Activated T-helper 1 cell treated with anti-CD3 and anti-CD28 coated beads, Interleukin-12 subunit alpha, Interleukin-12 subunit beta, Interleukin-2, Interleukin-4 antibody, amounts not matched to agents 30 ng/mL and 10 ng/mL and 1 ng/mL, durations not matched to agents 14 hours and 24 hours and 36 hours (primary cell): ENCODE measurements at regions of chr10 and their contacts with region 1.

Region 1: GRCh38 chr10:102009801-102010425 is 46.1 kb downstream of the ARMH3 start:
- DNase-seq: peak; percentile 41
- H3K4me3 Mint-ChIP-seq: no peak overlapping the region
- H3K27ac Mint-ChIP-seq: no peak overlapping the region
- H3K4me1 Mint-ChIP-seq: no peaks in the 10 kb centered on the region
- H3K27me3 Mint-ChIP-seq: no peaks in the 10 kb centered on the region

Region 2: DNA sequence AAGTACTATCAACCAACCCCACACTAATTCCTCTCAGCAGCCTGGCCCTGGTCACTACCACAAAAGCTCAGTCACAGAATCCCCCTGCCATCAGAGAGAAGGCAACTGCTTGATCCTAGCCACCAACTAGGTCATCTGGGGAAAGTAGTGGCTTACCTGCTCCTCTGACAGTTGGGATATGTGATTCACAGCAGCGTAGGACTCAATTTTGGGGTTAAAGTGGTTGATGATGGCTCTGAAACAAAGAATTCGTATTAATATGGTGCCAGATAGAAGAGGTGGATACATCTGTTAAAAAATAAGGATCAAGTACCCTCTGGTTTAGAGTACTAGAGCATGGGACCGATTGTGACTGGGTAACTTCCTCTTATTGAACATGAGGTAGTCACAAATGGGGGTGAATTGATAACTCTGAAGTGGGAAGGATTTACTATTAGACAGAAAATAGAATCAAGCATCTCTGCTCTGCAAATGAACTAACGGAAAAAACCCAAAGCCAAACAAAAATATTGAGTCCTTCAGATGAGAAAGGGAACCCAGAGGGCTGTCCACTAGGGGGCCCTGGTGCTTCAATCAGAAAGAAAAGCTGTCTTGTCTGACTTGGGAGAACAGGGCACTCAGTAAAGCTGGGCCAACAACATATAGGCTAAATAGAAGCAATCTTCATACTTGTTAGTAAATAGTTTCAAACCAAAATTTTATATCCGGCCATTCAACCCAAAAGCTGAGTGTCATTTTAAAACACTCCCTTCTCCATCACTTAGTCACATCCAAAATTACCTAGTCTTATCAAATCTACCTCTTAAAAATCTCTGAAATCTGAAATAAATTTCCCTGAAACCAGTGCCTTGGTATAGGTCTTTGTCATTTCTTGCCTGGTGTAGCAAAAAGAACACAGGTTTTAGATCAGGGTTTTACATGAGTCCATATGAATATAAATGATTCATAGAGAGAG is 120.4 kb before region 1 on chr10:
- intact Hi-C with region 1: loop called (anchors 1 kb)
- DNase-seq: peak; percentile 52
- H3K4me3 Mint-ChIP-seq: no peak overlapping the region
- H3K27ac Mint-ChIP-seq: no peak overlapping the region
- H3K4me1 Mint-ChIP-seq: peaks cover 9% of the 10 kb centered on the region
- H3K27me3 Mint-ChIP-seq: no peaks in the 10 kb centered on the region

Region 3: DNA sequence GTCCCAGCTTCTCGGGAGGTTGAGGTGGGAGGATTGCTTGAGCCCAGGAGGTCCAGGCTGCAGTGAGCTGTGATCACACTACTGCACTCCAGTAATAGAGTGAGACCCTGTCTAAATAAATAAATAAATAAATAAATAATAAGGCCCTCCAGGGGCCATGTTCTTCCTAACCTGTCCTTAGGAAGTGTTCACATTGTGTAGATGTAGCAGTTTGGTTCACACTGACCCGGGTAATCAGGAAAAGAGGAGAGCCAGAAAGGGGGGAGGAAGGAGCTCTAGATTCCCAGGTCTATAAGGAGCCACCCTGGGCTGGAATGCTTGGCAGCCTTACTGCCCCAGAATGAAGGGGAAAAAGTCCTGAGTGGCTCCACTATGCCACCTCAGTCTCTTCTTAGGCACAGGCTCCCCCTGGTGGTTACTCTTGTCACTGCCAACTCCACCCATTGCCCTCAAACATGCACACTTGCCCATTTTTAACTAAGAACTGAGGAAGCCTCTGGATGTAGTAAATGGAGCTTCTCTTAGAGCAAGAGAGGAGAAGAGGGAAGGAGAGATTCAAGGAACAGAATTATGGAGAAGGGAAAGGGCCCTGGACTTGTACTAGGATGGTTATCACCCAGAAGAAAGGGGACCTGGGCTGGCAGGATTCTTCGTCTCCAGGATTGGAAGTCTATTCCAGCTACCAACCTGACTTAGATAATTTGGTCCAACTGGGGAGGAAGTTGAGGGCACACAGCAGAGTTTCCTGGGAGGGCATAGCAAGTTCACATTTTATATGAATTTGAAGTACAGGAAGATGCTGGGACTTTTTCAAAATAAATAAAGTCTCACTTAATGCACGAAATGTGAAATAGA is 63.0 kb after region 1 on chr10:
- intact Hi-C with region 1: loop called (anchors 5 kb)
- DNase-seq: peak; percentile 67
- H3K4me3 Mint-ChIP-seq: no peak overlapping the region
- H3K27ac Mint-ChIP-seq: no peak overlapping the region
- H3K4me1 Mint-ChIP-seq: peaks cover 6% of the 10 kb centered on the region
- H3K27me3 Mint-ChIP-seq: no peaks in the 10 kb centered on the region

Region 4: GRCh38 chr10:102245101-102245931 is 235.4 kb after region 1 on chr10 and contains the start of gene GBF1:
- intact Hi-C with region 1: no loop called
- DNase-seq: peak; percentile 90
- H3K4me3 Mint-ChIP-seq: peak within 1 kb of the TSS; percentile 96
- H3K27ac Mint-ChIP-seq: peak within 1 kb of the TSS; percentile 91
- H3K4me1 Mint-ChIP-seq: peaks cover 38% of the 10 kb centered on the region
- H3K27me3 Mint-ChIP-seq: peaks cover 9% of the 10 kb centered on the region
- total RNA-seq, gene GBF1: 46.7 TPM in 2 replicates